ENCODE measurements at regions of chr7 and their contacts with region 1.

Region 1: GRCh38 chr7:88442413-88442812 is 135.7 kb upstream of the STEAP4 start:
- DNase-seq: no peak
- H3K4me3 ChIP-seq: no peak overlapping the region
- CTCF ChIP-seq: no peak

Region 2: DNA sequence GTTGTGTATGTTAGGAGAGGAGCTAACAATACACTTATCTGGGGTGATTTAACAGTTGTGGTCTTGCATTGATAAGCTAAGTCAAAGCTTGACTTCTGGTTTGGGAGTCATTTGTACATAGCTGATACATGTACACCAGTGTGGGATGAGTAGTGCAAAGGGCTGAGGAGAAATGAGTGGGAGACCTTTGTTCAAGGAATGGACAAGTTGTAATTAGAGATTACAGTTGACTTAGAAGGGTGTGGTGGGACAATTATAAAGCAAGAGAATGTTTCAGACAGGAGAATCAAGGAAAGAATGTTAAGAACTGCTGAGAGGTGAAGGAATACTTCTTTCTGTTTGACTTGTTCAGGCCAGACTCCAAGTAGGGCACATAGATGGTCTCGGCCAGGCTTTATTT is 74.0 kb after region 1 on chr7:
- in situ Hi-C with region 1: loop called (anchors 5 kb)
- DNase-seq: no peak
- H3K4me3 ChIP-seq: no peak overlapping the region
- CTCF ChIP-seq: no peak

Region 3: GRCh38 chr7:88638583-88638982 is 196.2 kb after region 1 on chr7:
- in situ Hi-C with region 1: no loop called
- DNase-seq: no peak
- H3K4me3 ChIP-seq: no peak overlapping the region
- CTCF ChIP-seq: no peak